Psoas muscle (tissue), 8 donors: ENCODE measurements at regions of chr18 and their contacts with region 1.

Region 1: DNA sequence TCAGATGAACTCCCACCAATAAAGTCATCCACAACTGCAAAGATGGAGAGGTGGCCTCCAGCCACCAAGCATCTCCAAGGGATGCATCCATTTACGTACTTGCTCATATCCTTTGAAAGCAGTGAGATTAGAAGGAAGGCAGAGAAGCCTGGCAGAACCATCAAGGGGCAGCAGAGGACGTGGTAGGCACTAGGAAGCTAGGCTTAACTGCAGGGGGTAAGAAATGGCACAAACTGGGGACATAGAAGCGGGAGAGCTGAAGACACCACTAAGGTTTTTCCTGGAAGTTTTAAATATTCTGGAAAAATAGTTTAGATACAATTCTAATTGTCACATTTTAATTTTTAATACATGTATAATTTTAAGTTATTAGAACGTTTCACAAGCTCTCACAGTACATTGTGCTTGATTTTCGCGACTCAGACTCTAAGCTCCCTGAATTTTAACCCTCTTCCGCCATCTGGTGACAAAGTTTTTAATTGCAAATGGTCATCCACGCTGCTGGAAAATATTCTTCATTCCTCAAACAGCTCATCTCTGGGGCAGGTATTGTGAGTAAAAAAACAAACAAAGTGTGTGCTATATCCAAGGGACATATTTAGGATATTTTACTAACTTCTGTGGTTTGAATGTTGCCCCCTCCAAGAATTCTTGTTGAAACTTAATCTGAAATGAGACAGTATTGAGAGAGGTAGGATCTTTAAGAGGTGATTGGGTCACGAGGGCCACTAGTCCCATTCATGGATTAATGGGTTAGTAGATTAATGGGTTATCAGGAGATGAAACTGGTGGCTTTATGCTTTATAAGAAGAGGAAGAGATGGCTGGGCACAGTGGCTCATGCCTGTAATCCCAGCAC is 1.6 kb upstream of the PSTPIP2 start:
- DNase-seq: no peak
- ATAC-seq: peak; percentile 29 to 70 (median 52)
- H3K4me3 ChIP-seq: no peak overlapping the region
- H3K27ac ChIP-seq: no peak overlapping the region
- H3K4me1 ChIP-seq: peaks cover 16% of the 10 kb centered on the region
- H3K27me3 ChIP-seq: no peaks in the 10 kb centered on the region
- CTCF ChIP-seq: peak; percentile 71

Region 2: DNA sequence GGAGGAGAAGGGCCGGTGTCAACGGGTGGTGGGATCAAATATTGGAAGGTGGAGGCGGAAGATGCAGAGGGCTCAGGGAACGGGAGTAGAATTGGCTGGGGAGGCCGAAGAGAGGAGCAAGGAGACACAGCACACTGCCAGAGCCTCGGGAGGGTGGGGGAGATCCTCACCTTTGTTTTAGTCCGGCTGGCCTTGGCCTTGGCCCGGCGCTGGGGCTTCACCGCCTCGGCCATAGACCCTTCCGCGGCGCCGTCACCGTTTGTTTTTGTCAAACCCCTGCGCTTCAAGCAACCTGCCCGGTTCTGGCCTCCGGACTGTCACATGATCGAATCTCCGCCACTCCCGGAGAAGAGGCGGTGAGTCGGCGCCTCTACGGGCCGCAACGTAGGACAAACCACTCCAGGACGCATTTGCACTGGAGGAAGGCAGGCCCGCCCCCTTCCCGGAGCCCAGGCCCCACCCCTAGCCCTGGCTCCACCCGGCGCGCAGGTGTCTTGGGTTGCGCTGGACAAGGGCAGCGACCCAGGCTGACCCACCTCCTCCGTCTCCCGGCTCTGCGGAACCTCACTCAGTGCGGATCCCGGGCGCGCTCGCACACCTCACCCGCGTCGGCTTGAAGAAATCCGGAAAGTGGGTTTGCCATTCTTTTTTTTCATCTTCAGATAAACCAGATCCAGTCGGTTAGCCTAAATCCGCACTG is 106.5 kb before region 1 on chr18 and contains the start of gene EPG5:
- intact Hi-C with region 1: loop called (anchors 5 kb)
- DNase-seq: peak; percentile 95 to 96
- ATAC-seq: peak; percentile 99 to 100 (median 99)
- H3K4me3 ChIP-seq: peak within 1 kb of the TSS; percentile 93
- H3K27ac ChIP-seq: peak within 1 kb of the TSS; percentile 88
- H3K4me1 ChIP-seq: peaks cover 24% of the 10 kb centered on the region
- H3K27me3 ChIP-seq: no peaks in the 10 kb centered on the region
- CTCF ChIP-seq: no peak
- total RNA-seq, gene EPG5: 11.9 to 19.9 (median 16.0) TPM